ENCODE measurements at regions of chr7 and their contacts with region 1.

Region 1: GRCh38 chr7:107044347-107045194 is at the start of gene PRKAR2B:
- DNase-seq: peak; percentile 73
- H3K4me3 Mint-ChIP-seq: peak within 1 kb of the TSS; percentile 72
- H3K27ac Mint-ChIP-seq: no peak within 1 kb of the TSS
- H3K4me1 Mint-ChIP-seq: peaks cover 18% of the 10 kb centered on the region
- H3K27me3 Mint-ChIP-seq: peaks cover 39% of the 10 kb centered on the region
- total RNA-seq, gene PRKAR2B: 1.3 to 1.4 TPM

Region 2: DNA sequence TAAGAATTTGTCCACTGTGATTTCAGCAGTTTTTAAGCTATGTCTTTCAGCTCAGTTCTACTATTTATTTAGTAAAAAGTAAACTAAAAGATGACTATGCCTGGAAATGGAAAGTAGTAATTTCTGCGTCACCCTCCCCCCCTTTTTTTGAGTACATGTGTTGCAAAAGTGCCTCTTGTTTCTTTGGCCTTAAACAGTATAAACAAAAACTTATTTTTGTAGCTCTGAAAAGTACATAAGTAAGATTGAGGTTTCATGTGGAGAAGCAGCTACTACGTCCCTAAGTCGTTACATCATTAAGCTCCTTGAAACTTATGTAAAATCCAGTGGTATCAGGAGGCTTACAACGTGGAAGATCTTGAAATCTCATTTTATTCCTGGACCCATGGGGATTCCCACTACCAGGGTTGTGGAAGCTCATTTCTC is 77.9 kb after region 1 on chr7:
- CTCF ChIA-PET with region 1: interaction called, 3 read pairs
- POLR2A ChIA-PET with region 1: no interaction called
- intact Hi-C with region 1: loop called (anchors 5 kb)
- DNase-seq: no peak
- H3K4me3 Mint-ChIP-seq: no peak overlapping the region
- H3K27ac Mint-ChIP-seq: no peak overlapping the region
- H3K4me1 Mint-ChIP-seq: peaks cover 17% of the 10 kb centered on the region
- H3K27me3 Mint-ChIP-seq: no peaks in the 10 kb centered on the region